Esophagus muscularis mucosa (tissue), 4 donors: ENCODE measurements at regions of chr19 and their contacts with region 1.

Region 1: GRCh38 chr19:41144403-41144802 is 30.2 kb downstream of the CYP2F1 start:
- DNase-seq: no peak
- H3K4me3 ChIP-seq: no peak overlapping the region
- H3K27ac ChIP-seq: no peak overlapping the region
- H3K4me1 ChIP-seq: no peaks in the 10 kb centered on the region
- H3K27me3 ChIP-seq: peaks cover 0 to 33% (median 0%) of the 10 kb centered on the region in 4 donors
- CTCF ChIP-seq: peak; percentile 80 to 82 (median 82)
- EP300 ChIP-seq: no peak
- POLR2A ChIP-seq: no peak

Region 2: DNA sequence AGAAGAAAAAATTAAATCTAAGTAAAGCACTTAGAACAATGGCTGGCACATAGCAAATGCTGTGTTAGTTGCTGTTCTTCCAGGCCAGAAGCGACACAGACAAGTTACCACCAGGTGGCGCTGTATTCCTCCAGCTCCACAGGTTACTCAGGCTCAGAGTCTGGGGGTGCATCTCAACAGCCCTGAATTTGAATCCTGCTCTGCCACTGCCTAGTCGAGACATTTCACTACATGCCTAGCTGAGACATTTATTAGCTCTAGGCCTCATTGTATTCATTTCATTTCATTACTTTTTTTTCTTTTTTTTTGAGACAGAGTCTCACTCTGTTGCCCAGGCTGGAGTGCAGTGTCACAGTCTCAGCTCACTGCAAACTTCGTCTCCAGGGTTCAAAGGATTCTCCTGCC is 169.8 kb before region 1 on chr19:
- intact Hi-C with region 1: loop called (anchors 2 kb)
- DNase-seq: peak; percentile 93
- H3K4me3 ChIP-seq: no peak overlapping the region
- H3K27ac ChIP-seq: no peak overlapping the region
- H3K4me1 ChIP-seq: no peaks in the 10 kb centered on the region
- H3K27me3 ChIP-seq: peaks cover 0 to 43% (median 0%) of the 10 kb centered on the region in 4 donors
- CTCF ChIP-seq: peak; percentile 66 to 86 (median 78)
- EP300 ChIP-seq: no peak
- POLR2A ChIP-seq: no peak

Region 3: DNA sequence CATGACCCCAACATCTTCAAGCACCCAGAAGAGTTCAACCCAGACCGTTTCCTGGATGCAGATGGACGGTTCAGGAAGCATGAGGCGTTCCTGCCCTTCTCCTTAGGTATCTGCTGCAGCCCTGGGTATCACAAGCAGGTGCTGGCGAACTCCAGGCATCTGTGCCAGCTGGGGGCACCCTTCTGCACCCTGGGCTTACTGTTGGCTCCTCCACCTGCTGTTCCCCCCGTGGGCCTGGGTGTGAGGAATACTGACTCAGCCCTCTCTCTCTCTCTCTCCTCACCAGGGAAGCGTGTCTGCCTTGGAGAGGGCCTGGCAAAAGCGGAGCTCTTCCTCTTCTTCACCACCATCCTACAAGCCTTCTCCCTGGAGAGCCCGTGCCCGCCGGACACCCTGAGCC is 61.6 kb after region 1 on chr19:
- intact Hi-C with region 1: no loop called
- DNase-seq: no peak
- H3K4me3 ChIP-seq: no peak overlapping the region
- H3K27ac ChIP-seq: peak overlapping the region in 1 of 4 donors; percentile 54
- H3K4me1 ChIP-seq: peaks cover 0 to 6% (median 0%) of the 10 kb centered on the region in 4 donors
- H3K27me3 ChIP-seq: peaks cover 0 to 4% (median 0%) of the 10 kb centered on the region in 4 donors
- CTCF ChIP-seq: no peak
- EP300 ChIP-seq: no peak
- POLR2A ChIP-seq: no peak

Region 4: GRCh38 chr19:41233748-41234240 is 89.4 kb after region 1 on chr19:
- intact Hi-C with region 1: no loop called
- DNase-seq: no peak
- H3K4me3 ChIP-seq: no peak overlapping the region
- H3K27ac ChIP-seq: no peak overlapping the region
- H3K4me1 ChIP-seq: peaks cover 0 to 9% (median 6%) of the 10 kb centered on the region in 4 donors
- H3K27me3 ChIP-seq: no peaks in the 10 kb centered on the region
- CTCF ChIP-seq: no peak
- EP300 ChIP-seq: no peak
- POLR2A ChIP-seq: no peak